ENCODE measurements at regions of chr10 and their contacts with region 1.

Region 1: DNA sequence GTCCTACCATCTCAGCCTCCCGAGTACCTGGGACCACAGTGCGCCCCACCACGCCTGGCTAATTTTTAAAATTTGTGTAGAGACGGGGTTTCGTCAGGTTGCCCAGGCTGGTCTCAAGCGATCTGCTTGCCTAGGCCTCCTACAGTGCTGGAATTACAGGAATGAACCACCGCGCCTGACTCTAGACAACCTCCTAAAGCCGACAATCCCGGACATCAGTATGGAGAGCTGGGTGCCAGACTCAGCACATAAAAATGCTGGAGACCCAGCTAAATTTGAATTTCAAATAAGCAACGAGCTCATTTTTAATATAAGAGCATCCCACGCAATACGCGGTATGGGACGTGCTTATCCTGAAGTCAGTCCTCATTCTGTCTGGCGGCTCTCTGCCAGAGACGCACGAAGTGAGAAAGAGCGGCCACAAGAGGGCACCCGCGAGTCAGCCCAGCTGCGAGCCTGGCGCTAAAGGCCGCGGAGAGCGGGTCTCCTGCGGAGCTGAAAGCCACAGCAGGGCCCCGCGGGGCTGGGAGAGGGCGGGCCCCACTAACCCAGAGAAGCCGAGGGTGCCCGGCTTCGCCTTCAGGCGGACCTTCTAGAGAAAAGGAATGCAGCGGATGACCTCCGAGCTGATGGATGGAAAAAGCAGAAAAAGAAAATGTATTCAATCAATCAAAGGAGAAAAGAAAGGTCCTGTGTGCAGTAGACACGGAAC is 7.0 kb downstream of the CALY start:
- DNase-seq: peak; percentile 85 to 89
- ATAC-seq: peak; percentile 70 to 90
- H3K4me3 ChIP-seq: peak overlapping the region; percentile 23; the same call in 1 of the 3 replicates
- H3K27ac ChIP-seq: peak overlapping the region in 1 of 2 experiments; percentile 65; a peak in 2 of 6 replicates
- H3K4me1 ChIP-seq: peaks cover 23% of the 10 kb centered on the region
- CTCF ChIP-seq: peak; percentile 92
- EP300 ChIP-seq: no peak
- POLR2A ChIP-seq: no peak
- RAD21 ChIP-seq: peak; percentile 75 to 83

Region 2: DNA sequence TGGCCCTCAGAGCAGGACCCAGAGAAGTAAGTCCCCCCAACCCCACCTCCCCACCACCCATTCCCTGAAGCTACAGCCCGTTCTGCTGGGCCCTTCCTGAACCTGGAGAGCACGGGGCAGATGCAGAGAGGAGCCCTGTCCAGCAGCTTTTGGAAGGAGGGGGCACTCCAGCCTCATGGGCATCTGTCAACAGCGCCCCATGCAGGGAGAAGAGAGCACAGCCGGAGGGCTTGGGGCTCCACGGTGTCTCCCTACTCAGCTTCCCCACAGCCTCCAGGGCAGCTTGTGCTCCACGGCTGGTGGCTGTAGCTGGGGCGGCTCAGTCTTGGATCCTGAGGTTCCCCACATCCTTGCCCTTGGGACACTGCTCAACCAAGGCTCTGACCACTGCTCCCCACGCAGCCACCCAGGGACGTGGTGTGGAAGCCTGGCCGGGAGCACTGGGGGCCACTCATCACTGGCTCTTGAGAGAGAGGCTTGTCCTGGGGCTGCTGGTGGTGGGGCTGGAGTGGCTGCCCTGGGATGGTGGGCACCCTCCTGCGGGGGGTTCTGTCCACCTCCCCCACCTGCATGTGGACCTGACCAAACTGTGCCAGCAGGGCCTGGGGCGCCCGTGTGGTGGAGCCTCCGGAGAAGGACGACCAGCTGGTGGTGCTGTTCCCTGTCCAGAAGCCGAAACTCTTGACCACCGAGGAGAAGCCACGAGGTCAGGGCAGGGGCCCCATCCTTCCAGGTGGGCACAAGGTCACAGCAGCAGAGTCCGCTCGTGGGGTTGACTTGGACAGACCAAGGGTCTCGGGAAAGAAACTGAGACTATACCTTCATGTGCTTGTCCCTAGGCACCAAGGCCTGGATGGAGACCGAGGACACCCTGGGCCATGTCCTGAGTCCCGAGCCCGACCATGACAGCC is 22.0 kb after region 1 on chr10:
- CTCF ChIA-PET with region 1: interaction called, 76 read pairs
- POLR2A ChIA-PET with region 1: no interaction called
- DNase-seq: no peak
- ATAC-seq: peak; percentile 4 to 38; a peak in 4 of 6 replicates
- H3K4me3 ChIP-seq: no peak overlapping the region
- H3K27ac ChIP-seq: no peak overlapping the region
- H3K4me1 ChIP-seq: peaks cover 5% of the 10 kb centered on the region; the same call in 1 of the 3 replicates
- CTCF ChIP-seq: no peak
- EP300 ChIP-seq: no peak
- POLR2A ChIP-seq: no peak
- RAD21 ChIP-seq: no peak

Region 3: GRCh38 chr10:133365461-133366129 is 35.9 kb after region 1 on chr10:
- CTCF ChIA-PET with region 1: interaction called, 15 read pairs
- POLR2A ChIA-PET with region 1: interaction called, 4 read pairs
- DNase-seq: no peak
- ATAC-seq: no peak
- H3K4me3 ChIP-seq: no peak overlapping the region
- H3K27ac ChIP-seq: no peak overlapping the region
- H3K4me1 ChIP-seq: no peaks in the 10 kb centered on the region
- CTCF ChIP-seq: no peak
- EP300 ChIP-seq: no peak
- POLR2A ChIP-seq: no peak
- RAD21 ChIP-seq: no peak

Region 4: GRCh38 chr10:133388236-133388972 is 58.8 kb after region 1 on chr10:
- CTCF ChIA-PET with region 1: interaction called, 15 read pairs
- POLR2A ChIA-PET with region 1: no interaction called
- DNase-seq: peak in 1 of 2 experiments; percentile 40
- ATAC-seq: peak in 1 of 2 experiments; percentile 53; a peak in 2 of 6 replicates
- H3K4me3 ChIP-seq: no peak overlapping the region
- H3K27ac ChIP-seq: no peak overlapping the region
- H3K4me1 ChIP-seq: peaks cover 6% of the 10 kb centered on the region; the same call in 2 of the 3 replicates
- CTCF ChIP-seq: no peak
- EP300 ChIP-seq: no peak
- POLR2A ChIP-seq: no peak
- RAD21 ChIP-seq: no peak

Region 5: DNA sequence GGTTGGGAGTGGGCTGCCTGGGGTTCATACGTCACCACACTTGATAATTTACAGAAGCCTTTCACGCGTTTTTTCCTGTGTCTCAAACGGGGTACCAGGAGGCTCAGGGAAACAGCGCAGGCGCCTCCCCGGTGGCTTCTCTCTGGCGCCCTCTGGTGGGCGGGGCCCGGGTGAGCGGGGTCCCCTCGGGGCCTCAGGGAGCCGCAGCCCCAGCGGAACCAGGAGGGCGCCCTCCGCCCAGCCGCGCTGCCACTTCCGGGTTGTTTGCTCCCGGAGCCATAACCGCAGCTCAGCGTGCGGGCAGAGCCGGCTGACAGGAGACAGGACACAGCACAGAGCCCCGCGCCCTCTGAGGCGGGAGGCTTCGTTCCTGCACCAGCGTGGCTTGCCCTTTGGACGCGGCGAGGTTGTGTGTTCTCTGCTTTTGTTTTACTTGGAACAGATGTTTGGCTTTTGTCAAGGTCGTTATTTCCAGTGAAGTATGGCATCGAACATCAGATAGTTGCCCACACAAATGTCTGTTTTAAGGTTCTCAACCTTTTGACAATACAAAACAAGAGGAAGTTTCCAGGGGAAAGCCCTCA is 190.6 kb after region 1 on chr10:
- CTCF ChIA-PET with region 1: interaction called, 10 read pairs
- POLR2A ChIA-PET with region 1: no interaction called
- DNase-seq: peak; percentile 79 to 91
- ATAC-seq: peak; percentile 100
- H3K4me3 ChIP-seq: peak overlapping the region; percentile 49
- H3K27ac ChIP-seq: peak overlapping the region; percentile 71 to 80
- H3K4me1 ChIP-seq: 0 out of 3 replicates have a peak, but pooled peaks cover 3% of the 10 kb centered on the region
- CTCF ChIP-seq: peak; percentile 96
- EP300 ChIP-seq: no peak
- POLR2A ChIP-seq: peak; percentile 82
- RAD21 ChIP-seq: peak; percentile 44 to 59

Measured in A549 (cell line).